Left ventricle myocardium inferior (tissue), 1 donor: ENCODE measurements at regions of chr2 and their contacts with region 1.

Region 1: DNA sequence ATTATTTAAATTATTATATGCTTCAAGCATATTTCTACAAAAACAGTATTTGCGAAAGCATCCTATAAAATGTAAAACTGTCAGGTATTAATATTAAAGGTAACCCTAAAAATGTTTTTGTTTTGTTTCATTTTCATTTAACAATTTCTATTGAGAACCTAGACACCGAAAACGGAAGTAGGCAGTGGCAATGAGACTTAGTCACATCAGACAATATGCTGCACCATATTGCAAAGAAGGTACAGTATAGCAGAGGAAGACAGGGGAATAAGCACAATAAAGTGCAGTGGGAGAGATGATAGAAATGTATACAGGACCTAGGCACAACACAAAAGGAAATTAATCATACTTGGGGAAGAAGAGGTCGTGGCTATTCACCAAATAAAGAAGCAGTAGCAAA is 12.2 kb downstream of the SCN1A start:
- DNase-seq: no peak
- H3K4me3 ChIP-seq: no peak overlapping the region
- H3K27ac ChIP-seq: no peak overlapping the region
- H3K4me1 ChIP-seq: no peaks in the 10 kb centered on the region
- H3K27me3 ChIP-seq: no peaks in the 10 kb centered on the region
- CTCF ChIP-seq: no peak

Region 2: DNA sequence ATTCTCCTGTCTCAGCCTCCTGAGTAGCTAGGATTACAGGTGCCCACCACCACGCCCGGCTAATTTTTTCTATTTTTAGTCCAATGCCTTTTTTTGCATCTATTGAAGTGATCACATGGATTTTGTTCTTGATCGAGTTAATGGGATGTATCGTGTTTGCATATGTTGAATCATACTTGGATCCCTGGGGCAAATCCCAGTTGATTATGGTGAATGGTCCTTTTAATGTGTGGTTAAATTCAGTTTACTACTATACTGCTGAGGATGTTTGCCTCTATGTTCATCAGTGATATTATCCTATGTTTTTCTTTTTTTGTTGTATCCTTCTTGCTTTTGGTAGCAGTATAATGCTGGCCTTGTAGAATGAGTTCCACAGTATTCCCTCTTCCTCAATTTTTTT is 153.8 kb before region 1 on chr2:
- intact Hi-C with region 1: loop called (anchors 5 kb)
- DNase-seq: no peak
- H3K4me3 ChIP-seq: no peak overlapping the region
- H3K27ac ChIP-seq: no peak overlapping the region
- H3K4me1 ChIP-seq: no peaks in the 10 kb centered on the region
- H3K27me3 ChIP-seq: no peaks in the 10 kb centered on the region
- CTCF ChIP-seq: no peak

Region 3: DNA sequence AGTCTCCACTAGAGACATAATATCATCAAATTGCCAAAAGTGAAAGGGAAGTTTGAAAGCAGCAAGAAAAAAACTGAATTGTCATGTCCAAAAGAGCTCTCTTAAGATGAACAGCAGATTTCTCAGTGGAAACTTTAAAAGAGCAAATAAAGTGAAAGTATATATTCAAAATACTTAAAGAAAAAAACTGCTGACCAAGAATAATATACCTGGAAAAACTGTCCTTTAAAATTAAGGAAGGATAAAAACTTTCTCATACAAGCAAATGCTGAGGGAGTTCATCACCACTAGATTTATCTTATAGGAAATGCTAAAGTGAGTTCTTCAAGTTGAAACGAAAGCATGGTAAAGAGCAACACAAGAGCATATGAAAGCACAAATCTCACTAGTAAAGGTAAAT is 95.5 kb after region 1 on chr2:
- intact Hi-C with region 1: no loop called
- DNase-seq: no peak
- H3K4me3 ChIP-seq: no peak overlapping the region
- H3K27ac ChIP-seq: no peak overlapping the region
- H3K4me1 ChIP-seq: no peaks in the 10 kb centered on the region
- H3K27me3 ChIP-seq: no peaks in the 10 kb centered on the region
- CTCF ChIP-seq: no peak